ENCODE measurements at regions of chr1 and their contacts with region 1.

Region 1: DNA sequence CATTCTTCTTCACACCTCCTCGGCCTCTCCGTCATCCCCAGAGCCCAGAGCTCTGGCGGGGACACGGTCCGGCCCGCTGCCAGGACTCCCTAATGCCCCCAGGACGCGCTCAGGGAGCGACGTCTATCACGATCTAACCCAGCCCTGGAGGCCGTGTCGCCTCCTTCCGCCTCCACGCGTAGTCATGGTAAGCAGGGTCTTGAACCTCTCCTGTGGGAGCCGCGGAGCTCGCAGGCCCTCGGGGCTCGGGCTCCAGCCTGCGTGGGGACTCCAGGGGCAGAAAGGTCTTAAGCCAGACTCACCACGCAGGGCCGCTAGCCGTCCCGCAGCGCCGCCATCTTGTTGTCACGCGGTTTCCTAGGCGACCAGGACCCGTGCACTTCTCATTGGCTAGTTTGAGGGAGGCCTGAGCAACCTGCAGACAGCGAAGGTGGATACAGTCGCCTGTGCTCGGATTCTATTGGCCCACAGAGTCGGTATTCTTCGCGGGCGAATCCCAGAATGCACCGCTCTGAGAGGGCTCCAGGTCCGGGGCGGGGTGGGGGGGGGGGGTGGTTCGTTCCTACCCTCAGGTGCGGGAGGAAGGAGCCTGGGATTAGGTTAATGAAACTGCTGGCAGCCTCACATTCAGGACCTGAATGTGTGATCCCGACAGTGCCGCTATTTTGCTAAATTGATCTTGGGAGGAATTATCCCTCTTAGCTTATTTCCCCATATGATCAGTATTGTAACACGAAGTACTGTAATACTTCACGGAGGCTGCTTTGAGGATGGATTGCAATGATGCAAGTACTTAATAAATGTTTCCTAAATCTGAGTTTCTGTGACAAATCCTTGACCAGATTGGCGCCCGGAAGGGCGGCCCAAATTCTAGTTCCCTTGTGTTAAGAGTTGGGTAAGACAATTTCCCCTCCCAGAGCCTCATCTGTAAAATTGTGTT is at the start of gene UBXN11:
- DNase-seq: peak; percentile 88
- ATAC-seq: peak; percentile 100
- H3K4me3 ChIP-seq: peak within 1 kb of the TSS; percentile 76 to 87
- H3K27ac ChIP-seq: peak within 1 kb of the TSS; percentile 84
- H3K4me1 ChIP-seq: peaks cover 17% of the 10 kb centered on the region
- H3K27me3 ChIP-seq: no peaks in the 10 kb centered on the region
- CTCF ChIP-seq: no peak
- total RNA-seq, gene UBXN11: 23.7 TPM

Region 2: DNA sequence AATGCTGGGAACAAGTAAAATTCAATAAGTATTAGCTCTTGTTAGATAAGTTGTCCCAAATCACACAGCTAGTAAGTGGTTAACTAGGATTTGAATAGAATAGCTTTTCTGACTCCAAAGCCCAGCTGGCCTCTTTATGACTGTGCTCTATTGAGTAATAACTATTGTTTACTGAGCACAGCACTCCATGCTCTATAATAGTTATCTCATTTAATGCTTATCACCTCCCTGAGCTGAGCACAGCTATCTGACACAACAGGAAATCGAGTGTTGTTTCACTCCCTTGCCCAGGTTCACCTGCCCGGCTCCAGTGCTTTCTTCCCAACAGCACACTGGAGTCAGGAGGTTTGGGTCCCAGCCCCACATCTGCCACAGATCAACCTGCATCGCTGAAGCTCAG is 361.6 kb before region 1 on chr1:
- CTCF ChIA-PET with region 1: no interaction called
- POLR2A ChIA-PET with region 1: interaction called, 11 read pairs
- in situ Hi-C with region 1: no loop called
- intact Hi-C with region 1: no loop called
- DNase-seq: no peak
- ATAC-seq: no peak
- H3K4me3 ChIP-seq: no peak overlapping the region
- H3K27ac ChIP-seq: no peak overlapping the region
- H3K4me1 ChIP-seq: no peaks in the 10 kb centered on the region
- H3K27me3 ChIP-seq: no peaks in the 10 kb centered on the region
- CTCF ChIP-seq: no peak

Region 3: GRCh38 chr1:26490158-26490557 is 183.6 kb after region 1 on chr1:
- CTCF ChIA-PET with region 1: no interaction called
- POLR2A ChIA-PET with region 1: no interaction called
- in situ Hi-C with region 1: no loop called
- intact Hi-C with region 1: no loop called
- DNase-seq: no peak
- ATAC-seq: no peak
- H3K4me3 ChIP-seq: no peak overlapping the region
- H3K27ac ChIP-seq: no peak overlapping the region
- H3K4me1 ChIP-seq: no peaks in the 10 kb centered on the region
- H3K27me3 ChIP-seq: no peaks in the 10 kb centered on the region
- CTCF ChIP-seq: no peak